Activated B cell treated with CpG ODN at 0.5 μM for 24 hours (primary cell): ENCODE measurements at regions of chr2 and their contacts with region 1.

Region 1: DNA sequence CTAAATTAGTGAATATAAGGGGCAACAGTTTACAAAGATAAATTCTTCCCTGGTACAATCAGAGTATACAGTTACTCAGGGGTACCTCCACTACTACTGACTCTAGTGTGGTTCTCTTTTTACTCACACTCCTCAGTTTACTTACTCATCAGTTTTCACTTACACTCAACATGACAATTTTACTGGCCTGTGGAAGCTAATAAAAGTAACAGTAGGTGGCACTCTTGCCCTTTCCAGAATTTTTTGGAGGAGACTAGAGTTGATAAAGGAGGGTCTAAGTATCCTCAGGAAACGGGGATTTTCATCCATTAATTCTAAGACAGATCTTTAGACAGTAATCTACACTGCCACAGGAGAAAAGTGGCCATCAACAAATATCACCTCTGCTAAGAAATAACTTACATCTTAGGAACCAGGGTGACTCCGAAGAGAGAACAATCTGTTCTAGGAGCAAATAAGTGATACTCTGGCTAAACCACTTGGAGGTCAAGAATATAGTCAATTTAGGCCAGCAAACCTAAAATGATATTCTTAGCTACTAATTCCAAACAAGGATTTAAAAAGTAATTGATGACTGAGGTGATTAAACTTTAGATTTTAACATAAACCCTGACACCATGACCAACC is 61.3 kb downstream of the ATL2 start:
- DNase-seq: no peak
- ATAC-seq: peak; percentile 28
- H3K4me3 Mint-ChIP-seq: no peak overlapping the region
- H3K27ac Mint-ChIP-seq: no peak overlapping the region
- H3K4me1 Mint-ChIP-seq: no peaks in the 10 kb centered on the region
- H3K27me3 Mint-ChIP-seq: no peaks in the 10 kb centered on the region
- CTCF ChIP-seq: peak; percentile 40

Region 2: DNA sequence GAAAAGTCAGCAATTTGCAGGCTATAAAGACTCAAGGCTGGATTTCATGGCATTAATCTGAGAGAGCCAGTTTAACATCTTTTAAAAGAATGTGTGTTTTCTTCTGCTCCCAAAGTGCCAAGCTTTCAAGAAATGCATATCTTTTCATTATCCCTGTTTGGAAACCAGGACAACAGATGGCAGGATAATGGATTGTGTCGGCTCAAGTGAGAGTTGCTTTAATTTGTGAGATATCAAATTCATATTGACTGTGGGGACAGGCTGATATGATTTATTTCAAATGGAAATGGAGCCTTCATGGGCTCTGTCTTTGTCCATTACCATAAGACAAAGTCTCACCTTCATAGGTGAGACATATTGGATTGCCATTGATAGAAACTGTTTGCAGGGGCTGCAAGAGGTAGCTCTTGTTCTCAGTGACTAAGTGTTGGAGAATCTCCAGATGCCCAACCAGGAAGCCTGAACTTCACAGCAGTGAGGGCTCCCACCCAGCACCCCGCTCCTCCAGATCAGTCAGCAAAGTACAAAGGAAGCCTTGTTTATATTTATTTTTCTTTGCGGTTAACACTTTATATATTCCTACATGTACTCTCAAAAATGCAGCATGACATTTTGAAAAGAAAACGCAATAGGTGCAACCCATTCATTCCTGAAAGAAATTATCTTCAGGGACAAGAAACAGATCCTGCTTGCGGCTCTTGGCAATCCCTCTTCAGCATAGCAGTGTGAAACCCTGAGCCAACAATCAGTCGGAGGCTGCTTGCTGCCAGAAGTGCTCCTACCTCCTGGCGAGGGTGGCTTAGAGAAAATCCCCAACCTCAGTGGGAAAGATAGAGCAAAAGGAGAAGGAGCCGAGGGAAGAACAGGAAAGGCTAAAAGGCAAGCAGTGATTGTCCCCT is 127.1 kb after region 1 on chr2:
- CTCF ChIA-PET with region 1: no interaction called
- POLR2A ChIA-PET with region 1: no interaction called
- intact Hi-C with region 1: no loop called
- DNase-seq: no peak
- ATAC-seq: no peak
- H3K4me3 Mint-ChIP-seq: no peak overlapping the region
- H3K27ac Mint-ChIP-seq: no peak overlapping the region
- H3K4me1 Mint-ChIP-seq: no peaks in the 10 kb centered on the region
- H3K27me3 Mint-ChIP-seq: peaks cover 18% of the 10 kb centered on the region
- CTCF ChIP-seq: no peak

Region 3: GRCh38 chr2:38465789-38466127 is 149.9 kb after region 1 on chr2:
- CTCF ChIA-PET with region 1: interaction called, 37 read pairs
- POLR2A ChIA-PET with region 1: no interaction called
- intact Hi-C with region 1: loop called (anchors 1 kb)
- DNase-seq: no peak
- ATAC-seq: no peak
- H3K4me3 Mint-ChIP-seq: no peak overlapping the region
- H3K27ac Mint-ChIP-seq: no peak overlapping the region
- H3K4me1 Mint-ChIP-seq: no peaks in the 10 kb centered on the region
- H3K27me3 Mint-ChIP-seq: peaks cover 5% of the 10 kb centered on the region
- CTCF ChIP-seq: no peak

Region 4: DNA sequence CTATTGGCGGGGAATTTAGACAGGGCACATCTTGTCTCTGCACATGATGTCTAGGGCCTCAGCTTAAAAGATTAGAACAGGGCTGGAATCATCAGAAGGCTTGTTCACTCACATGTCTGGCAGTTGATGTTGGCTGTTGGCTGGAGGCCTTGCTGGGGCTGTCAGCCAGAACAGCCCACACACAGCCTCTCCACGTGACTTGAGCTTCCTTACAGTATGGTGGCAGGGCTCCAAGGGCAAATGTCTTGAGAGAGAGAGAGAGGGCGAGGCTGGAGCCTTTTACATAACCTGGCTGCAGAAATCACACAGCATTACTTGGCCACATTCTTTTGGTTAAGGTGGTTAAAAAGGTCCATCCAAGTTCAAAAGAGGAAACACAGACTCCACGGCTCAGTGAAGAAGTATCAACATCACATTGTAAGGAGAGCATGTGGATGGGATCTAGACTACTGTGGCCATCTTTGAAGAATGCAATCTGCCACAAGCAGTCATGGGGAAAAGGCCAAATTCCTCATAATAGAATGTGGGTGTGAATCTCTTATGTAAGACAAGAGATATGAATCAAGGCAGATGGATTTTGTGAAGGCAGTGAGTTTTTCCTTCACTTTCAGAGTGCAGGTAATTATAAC is 404.9 kb after region 1 on chr2:
- CTCF ChIA-PET with region 1: no interaction called
- POLR2A ChIA-PET with region 1: no interaction called
- intact Hi-C with region 1: loop called (anchors 5 kb)
- DNase-seq: no peak
- ATAC-seq: no peak
- H3K4me3 Mint-ChIP-seq: no peak overlapping the region
- H3K27ac Mint-ChIP-seq: no peak overlapping the region
- H3K4me1 Mint-ChIP-seq: peaks cover 32% of the 10 kb centered on the region
- H3K27me3 Mint-ChIP-seq: no peaks in the 10 kb centered on the region
- CTCF ChIP-seq: no peak

Region 5: DNA sequence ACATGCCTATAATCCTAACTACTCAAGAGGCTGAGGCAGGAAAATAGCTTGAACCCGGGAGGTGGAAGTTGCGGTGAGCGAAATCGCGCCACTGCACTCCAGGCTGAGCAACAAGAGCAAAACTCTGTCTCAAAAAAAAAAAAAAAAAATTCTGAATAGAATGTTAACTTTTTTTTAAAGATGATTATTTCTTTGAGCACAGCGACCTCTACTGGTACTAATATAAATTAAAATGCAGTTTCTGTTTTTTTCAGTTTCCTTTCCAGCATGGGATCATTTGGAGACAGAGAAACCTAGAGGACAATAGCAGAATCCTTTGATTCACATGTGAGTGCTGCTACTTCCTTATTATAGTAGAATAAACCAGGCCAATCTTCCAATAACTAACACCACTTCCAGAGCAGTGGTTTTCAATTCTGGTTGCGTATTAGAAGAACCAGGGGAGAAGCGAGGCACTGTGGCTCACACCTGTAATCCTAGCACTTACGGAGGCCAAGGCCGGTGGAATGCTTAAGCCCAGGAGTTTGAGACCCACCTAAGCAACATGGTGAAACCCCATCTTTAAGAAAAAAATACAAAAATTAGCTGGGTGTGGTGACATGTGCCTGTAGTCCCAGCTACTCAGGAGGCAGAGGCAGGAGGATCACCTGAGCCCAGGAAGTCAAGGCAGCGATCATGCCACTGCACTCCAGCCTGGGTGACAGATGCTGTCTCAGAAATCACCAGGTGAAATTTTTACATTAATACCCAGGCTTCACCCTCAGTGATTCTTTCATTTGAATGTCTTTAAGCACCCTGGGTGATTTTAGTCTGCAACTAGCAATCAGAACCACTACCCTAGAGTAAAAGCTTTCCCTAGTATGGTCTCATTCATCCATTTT is 425.3 kb after region 1 on chr2:
- CTCF ChIA-PET with region 1: interaction called, 3 read pairs
- POLR2A ChIA-PET with region 1: no interaction called
- intact Hi-C with region 1: loop called (anchors 1 kb)
- DNase-seq: no peak
- ATAC-seq: peak; percentile 18
- H3K4me3 Mint-ChIP-seq: no peak overlapping the region
- H3K27ac Mint-ChIP-seq: peak overlapping the region; percentile 61
- H3K4me1 Mint-ChIP-seq: peaks cover 29% of the 10 kb centered on the region
- H3K27me3 Mint-ChIP-seq: no peaks in the 10 kb centered on the region
- CTCF ChIP-seq: no peak